Naive thymus-derived CD4-positive, alpha-beta T cell (primary cell): ENCODE measurements at regions of chr17 and their contacts with region 1.

Region 1: DNA sequence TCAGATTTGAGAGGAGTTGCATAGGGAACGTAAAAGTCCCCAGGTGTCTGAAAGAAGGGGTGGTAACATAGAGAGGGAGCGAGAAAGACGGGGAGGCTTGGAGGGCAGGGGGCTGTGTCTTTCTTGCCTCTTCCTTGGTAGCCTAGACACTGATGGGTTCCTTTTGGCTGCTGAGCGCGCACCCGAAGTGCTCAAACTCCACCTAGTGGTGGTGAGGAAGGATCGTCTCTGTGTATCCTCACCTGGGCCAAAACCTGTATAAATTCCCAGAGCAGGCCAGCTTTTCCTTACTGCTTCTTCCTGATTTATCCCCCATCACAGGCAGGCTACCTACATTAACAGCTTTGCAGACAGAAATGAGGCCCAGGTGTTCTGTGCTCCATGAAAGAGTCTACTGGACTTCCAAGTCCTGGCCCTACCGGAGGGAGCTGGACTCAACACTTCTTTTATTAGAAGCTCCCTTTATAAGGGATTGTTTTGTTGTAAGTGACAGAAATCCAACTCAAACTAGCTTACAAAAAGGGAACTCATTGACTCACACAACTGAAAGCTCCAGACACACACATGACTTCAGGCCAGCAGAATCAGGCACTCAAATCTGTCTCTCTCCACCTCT is 5.5 kb upstream of the SLC25A35 start:
- DNase-seq: peak; percentile 33 to 80 (median 72)
- ATAC-seq: peak; percentile 95
- H3K4me3 ChIP-seq: no peak overlapping the region
- H3K4me3 Mint-ChIP-seq: peak overlapping the region in 1 of 10 donors; percentile 14
- H3K27ac ChIP-seq: no peak overlapping the region
- H3K27ac Mint-ChIP-seq: peak overlapping the region in 7 of 9 donors; percentile 6 to 80 (median 71)
- H3K4me1 ChIP-seq: peaks cover 3 to 9% of the 10 kb centered on the region in 2 donors
- H3K4me1 Mint-ChIP-seq: peaks cover 7 to 18% (median 14%) of the 10 kb centered on the region in 7 donors
- H3K27me3 ChIP-seq: no peaks in the 10 kb centered on the region
- H3K27me3 Mint-ChIP-seq: peaks cover 0 to 5% (median 0%) of the 10 kb centered on the region in 5 donors

Region 2: GRCh38 chr17:8079291-8080207 is 221.2 kb before region 1 on chr17:
- CTCF ChIA-PET with region 1: interaction called, 5 read pairs
- POLR2A ChIA-PET with region 1: interaction called, 3 read pairs
- intact Hi-C with region 1: loop called in 1 of 2 experiments (anchors 1 kb)
- DNase-seq: peak; percentile 63 to 89 (median 79)
- ATAC-seq: peak; percentile 90
- H3K4me3 ChIP-seq: peak overlapping the region; percentile 62
- H3K4me3 Mint-ChIP-seq: peak overlapping the region; percentile 88 to 93 (median 91)
- H3K27ac ChIP-seq: peak overlapping the region; percentile 62
- H3K27ac Mint-ChIP-seq: peak overlapping the region; percentile 42 to 92 (median 79)
- H3K4me1 ChIP-seq: peaks cover 13 to 14% of the 10 kb centered on the region in 2 donors
- H3K4me1 Mint-ChIP-seq: peaks cover 10 to 21% (median 18%) of the 10 kb centered on the region in 7 donors
- H3K27me3 ChIP-seq: peaks cover 0 to 4% of the 10 kb centered on the region in 2 donors
- H3K27me3 Mint-ChIP-seq: peaks cover 7 to 18% (median 9%) of the 10 kb centered on the region in 5 donors

Region 3: DNA sequence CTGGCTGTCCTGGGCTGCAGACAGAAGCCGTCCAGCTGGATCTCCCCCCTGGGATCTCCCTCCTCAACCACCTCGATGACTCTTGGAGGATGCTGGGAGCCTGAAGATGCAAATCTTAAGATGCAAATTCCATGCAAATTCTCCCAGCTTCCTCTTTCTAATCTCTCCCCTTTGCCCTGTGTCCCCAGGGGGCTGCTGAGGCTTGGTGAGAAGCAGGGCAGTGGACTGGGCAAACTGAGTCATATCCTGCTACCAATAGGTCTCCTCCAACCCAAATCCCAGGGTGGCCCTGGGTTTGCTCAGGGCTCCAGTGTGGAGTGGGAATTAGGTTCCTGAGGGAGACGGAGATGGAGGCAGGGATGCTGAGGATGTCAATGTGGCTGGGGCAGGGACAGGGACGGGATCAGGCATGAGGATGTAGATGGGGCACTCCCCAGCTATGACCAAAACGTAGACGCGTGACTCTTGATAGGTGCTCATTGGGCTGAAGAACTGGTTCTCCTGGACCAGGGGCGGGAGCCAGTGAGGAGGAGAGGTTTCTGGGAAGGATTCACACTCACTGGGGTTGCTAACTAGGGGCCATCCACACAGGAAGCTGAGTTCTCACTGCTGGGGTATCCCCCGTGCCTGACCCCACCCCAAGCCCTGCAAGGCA is 209.6 kb before region 1 on chr17:
- CTCF ChIA-PET with region 1: interaction called, 11 read pairs
- POLR2A ChIA-PET with region 1: no interaction called
- intact Hi-C with region 1: loop called in 1 of 2 experiments (anchors 1 kb)
- DNase-seq: no peak
- ATAC-seq: no peak
- H3K4me3 ChIP-seq: no peak overlapping the region
- H3K4me3 Mint-ChIP-seq: no peak overlapping the region
- H3K27ac ChIP-seq: no peak overlapping the region
- H3K27ac Mint-ChIP-seq: no peak overlapping the region
- H3K4me1 ChIP-seq: peaks cover 5 to 13% of the 10 kb centered on the region in 2 donors
- H3K4me1 Mint-ChIP-seq: peaks cover 6 to 17% (median 15%) of the 10 kb centered on the region in 7 donors
- H3K27me3 ChIP-seq: peaks cover 0 to 5% of the 10 kb centered on the region in 2 donors
- H3K27me3 Mint-ChIP-seq: peaks cover 4 to 49% (median 21%) of the 10 kb centered on the region in 5 donors

Region 4: DNA sequence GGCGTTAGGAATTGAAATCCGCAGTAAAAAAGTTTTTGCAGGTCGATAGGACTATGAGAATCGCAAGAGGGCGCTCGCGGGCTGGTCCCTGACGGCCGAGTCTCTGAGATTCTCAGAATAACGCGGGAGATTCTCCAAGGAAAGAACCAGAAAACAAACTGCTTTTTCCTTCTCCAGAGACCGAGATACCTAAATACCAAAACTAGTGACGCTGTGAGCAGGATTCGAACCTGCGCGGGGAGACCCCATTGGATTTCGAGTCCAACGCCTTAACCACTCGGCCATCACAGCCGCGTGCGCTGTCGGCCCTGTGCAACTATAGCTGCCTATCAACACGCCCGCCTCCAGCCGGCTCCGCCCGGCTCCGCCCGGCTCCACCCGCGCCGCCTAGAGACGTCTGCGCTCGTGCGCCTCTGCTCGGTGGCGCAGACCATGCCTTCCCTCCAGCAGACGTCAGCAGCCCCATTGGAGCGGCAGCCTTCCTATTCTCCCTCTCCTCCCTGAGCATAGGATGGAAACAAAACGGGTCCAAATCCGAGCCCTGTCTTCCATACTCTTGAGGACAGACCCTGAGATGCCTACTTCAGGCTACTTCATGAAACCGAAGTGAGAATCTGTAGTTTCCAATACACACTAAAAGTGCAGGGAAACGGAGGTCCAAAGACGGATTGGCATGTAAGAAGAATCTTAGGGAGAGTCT is 161.9 kb before region 1 on chr17:
- CTCF ChIA-PET with region 1: interaction called, 20 read pairs
- POLR2A ChIA-PET with region 1: interaction called, 11 read pairs
- intact Hi-C with region 1: loop called (anchors 1 kb)
- DNase-seq: peak; percentile 93 to 99 (median 98)
- ATAC-seq: peak; percentile 90
- H3K4me3 ChIP-seq: peak overlapping the region; percentile 76
- H3K4me3 Mint-ChIP-seq: no peak overlapping the region
- H3K27ac ChIP-seq: peak overlapping the region; percentile 84
- H3K27ac Mint-ChIP-seq: no peak overlapping the region
- H3K4me1 ChIP-seq: peaks cover 8 to 17% of the 10 kb centered on the region in 2 donors
- H3K4me1 Mint-ChIP-seq: peaks cover 0 to 5% (median 0%) of the 10 kb centered on the region in 7 donors
- H3K27me3 ChIP-seq: no peaks in the 10 kb centered on the region
- H3K27me3 Mint-ChIP-seq: peaks cover 0 to 11% (median 0%) of the 10 kb centered on the region in 5 donors

Region 5: GRCh38 chr17:8243827-8244226 is 56.9 kb before region 1 on chr17:
- CTCF ChIA-PET with region 1: interaction called, 13 read pairs
- POLR2A ChIA-PET with region 1: interaction called, 121 read pairs
- intact Hi-C with region 1: loop called (anchors 1 kb)
- DNase-seq: peak in 2 of 9 donors; percentile 21 to 28
- ATAC-seq: no peak
- H3K4me3 ChIP-seq: peak overlapping the region; percentile 8
- H3K4me3 Mint-ChIP-seq: peak overlapping the region; percentile 42 to 100 (median 70)
- H3K27ac ChIP-seq: peak overlapping the region; percentile 27
- H3K27ac Mint-ChIP-seq: peak overlapping the region; percentile 63 to 100 (median 90)
- H3K4me1 ChIP-seq: peaks cover 24 to 40% of the 10 kb centered on the region in 2 donors
- H3K4me1 Mint-ChIP-seq: peaks cover 27 to 74% (median 49%) of the 10 kb centered on the region in 7 donors
- H3K27me3 ChIP-seq: no peaks in the 10 kb centered on the region
- H3K27me3 Mint-ChIP-seq: no peaks in the 10 kb centered on the region